SK-N-SH (cell line): ENCODE measurements at regions of chr14 and their contacts with region 1.

Region 1: GRCh38 chr14:59688224-59689170 is 111.9 kb upstream of the CCDC175 start:
- DNase-seq: peak; percentile 38
- H3K4me3 ChIP-seq: no peak overlapping the region
- H3K27ac ChIP-seq: no peak overlapping the region
- H3K4me1 ChIP-seq: no peaks in the 10 kb centered on the region
- H3K27me3 ChIP-seq: no peaks in the 10 kb centered on the region
- CTCF ChIP-seq: peak; percentile 63
- EP300 ChIP-seq: no peak
- RAD21 ChIP-seq: peak; percentile 62

Region 2: GRCh38 chr14:59632381-59632780 is 56.1 kb before region 1 on chr14:
- CTCF ChIA-PET with region 1: interaction called, 18 read pairs
- POLR2A ChIA-PET with region 1: no interaction called
- DNase-seq: peak; percentile 58
- H3K4me3 ChIP-seq: no peak overlapping the region
- H3K27ac ChIP-seq: no peak overlapping the region
- H3K4me1 ChIP-seq: no peaks in the 10 kb centered on the region; a peak in 3 of 4 replicates
- H3K27me3 ChIP-seq: peaks cover 19% of the 10 kb centered on the region; the same call in 1 of the 2 replicates
- CTCF ChIP-seq: peak; percentile 67
- EP300 ChIP-seq: no peak
- RAD21 ChIP-seq: peak; percentile 75